SK-N-SH (cell line): ENCODE measurements at regions of chr5 and their contacts with region 1.

Region 1: DNA sequence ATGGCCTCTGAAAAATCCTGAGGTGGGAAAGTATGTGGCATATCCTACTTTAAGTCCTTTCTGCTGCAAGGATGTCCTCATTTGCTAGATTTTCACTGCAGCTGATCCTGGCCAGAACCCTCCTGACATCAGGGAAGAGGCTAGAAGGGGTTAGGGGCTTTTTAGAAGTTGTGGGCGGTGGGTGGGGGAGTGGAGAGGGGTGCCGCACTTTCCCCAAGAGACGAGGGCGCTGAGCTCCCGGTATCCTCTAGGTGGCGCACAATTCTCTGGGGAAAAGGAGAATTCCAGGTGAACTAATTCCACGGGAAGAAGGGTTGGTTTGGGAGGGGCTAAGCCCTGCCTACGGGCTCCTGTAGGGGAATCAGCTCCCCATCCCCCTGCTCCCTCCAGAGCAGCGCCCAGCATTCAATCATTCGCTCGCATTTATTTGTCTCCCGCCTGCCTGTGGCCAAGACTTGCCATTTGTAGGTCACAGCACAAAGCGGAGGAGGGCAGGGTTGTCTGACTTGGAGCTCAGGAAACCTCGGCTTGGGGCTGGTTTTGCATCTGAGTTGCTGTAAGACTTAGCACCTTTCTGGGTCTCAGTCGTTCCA is 42.9 kb upstream of the HAND1 start:
- DNase-seq: peak; percentile 48
- H3K4me3 ChIP-seq: no peak overlapping the region
- H3K27ac ChIP-seq: peak overlapping the region in 1 of 2 experiments; percentile 100; a peak in 2 of 4 replicates
- H3K4me1 ChIP-seq: peaks cover 0 to 83% of the 10 kb centered on the region in 2 experiments; a peak in 2 of 4 replicates
- H3K27me3 ChIP-seq: no peaks in the 10 kb centered on the region
- CTCF ChIP-seq: peak; percentile 77
- EP300 ChIP-seq: no peak
- RAD21 ChIP-seq: peak; percentile 70

Region 2: DNA sequence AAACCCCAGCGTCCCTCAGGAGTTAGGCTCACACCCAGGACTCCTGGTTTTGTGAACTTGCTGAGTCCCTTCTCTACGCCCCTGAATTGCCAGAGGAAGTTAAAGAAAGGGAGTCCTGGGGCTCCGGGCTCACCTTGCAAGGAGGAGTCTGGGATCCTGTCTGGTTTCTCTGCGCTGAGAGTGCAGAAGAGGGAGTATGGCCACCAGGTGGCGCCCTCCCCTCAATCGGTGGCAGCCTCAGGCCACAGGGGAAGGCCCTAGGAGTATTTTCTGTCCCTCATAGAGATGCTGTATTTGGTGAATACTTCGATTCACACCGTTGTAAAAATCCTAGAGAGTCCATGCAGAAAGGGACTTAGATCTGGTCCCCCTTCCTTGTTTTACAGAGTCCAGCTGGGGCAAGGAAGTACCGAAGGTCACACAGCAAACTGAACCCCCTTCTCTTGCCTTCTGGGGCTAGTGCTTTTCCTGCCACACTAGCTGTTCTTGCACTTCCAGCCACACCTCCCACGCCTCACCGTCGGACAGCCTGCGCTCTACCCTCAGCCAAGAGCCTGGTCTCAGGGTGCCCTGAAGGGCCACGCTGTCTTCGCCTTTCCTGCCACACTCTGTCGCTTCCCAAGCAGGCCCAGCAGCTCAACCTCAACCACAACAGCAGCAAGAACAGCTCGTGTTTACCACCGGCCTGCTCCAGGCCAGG is 53.2 kb before region 1 on chr5:
- CTCF ChIA-PET with region 1: interaction called, 295 read pairs
- POLR2A ChIA-PET with region 1: interaction called, 28 read pairs
- DNase-seq: peak; percentile 85
- H3K4me3 ChIP-seq: no peak overlapping the region; a peak in 1 of 4 replicates
- H3K27ac ChIP-seq: peak overlapping the region in 1 of 2 experiments; percentile 53; a peak in 1 of 4 replicates
- H3K4me1 ChIP-seq: peaks cover 0 to 39% of the 10 kb centered on the region in 2 experiments; a peak in 2 of 4 replicates
- H3K27me3 ChIP-seq: no peaks in the 10 kb centered on the region; the same call in 1 of the 2 replicates
- CTCF ChIP-seq: peak; percentile 93
- EP300 ChIP-seq: no peak; a peak in 1 of 4 replicates
- RAD21 ChIP-seq: peak; percentile 94

Region 3: DNA sequence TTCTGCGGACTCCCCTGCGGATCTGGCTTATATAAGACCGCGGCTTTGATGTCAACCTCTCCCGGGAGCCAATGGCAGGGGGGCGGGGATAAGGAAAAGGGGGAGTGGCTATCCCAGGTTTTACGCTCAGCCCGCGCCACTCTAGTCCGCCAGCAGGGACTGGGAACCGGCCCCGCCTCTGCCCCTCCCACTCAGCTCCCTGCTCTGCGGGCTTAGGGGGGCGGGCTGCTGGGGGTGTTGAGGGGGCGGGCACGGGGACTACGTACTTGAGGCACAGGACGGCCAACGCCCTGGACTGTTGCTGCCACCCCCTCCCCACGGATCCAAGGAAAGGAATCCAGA is 42.8 kb before region 1 on chr5 and contains the start of gene HAND1:
- CTCF ChIA-PET with region 1: interaction called, 295 read pairs
- POLR2A ChIA-PET with region 1: interaction called, 87 read pairs
- DNase-seq: peak; percentile 99
- H3K4me3 ChIP-seq: peak within 1 kb of the TSS; percentile 60 to 74
- H3K27ac ChIP-seq: peak within 1 kb of the TSS in 1 of 2 experiments; percentile 96; a peak in 2 of 4 replicates
- H3K4me1 ChIP-seq: peaks cover 0 to 46% of the 10 kb centered on the region in 2 experiments; a peak in 1 of 4 replicates
- H3K27me3 ChIP-seq: peaks cover 94% of the 10 kb centered on the region
- CTCF ChIP-seq: no peak
- EP300 ChIP-seq: no peak; a peak in 1 of 4 replicates
- RAD21 ChIP-seq: 0 out of 2 replicates have a peak, but pooled peaks have one; percentile 24
- polyA plus RNA-seq, gene HAND1: 1.1 and 2.6 TPM in 2 replicates

Region 4: DNA sequence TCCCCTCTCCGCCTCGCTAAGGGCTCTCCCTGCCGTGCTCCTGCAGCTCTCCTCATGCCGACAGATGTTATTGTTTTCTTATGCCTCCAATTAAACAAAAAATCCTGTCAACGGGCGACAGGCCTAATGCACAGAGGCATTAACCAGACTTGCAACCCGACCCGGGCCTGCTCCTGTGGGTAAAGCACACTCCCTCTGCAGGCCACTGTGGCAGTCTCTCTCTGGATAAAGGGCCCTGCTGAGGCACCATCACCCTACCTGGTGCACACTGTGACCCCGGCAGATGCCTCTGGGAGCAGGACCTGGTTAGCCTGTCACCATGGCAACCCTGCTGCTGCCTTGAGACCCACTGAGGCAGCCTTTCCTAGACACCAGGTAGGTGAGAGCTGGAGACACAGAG is 15.3 kb before region 1 on chr5:
- CTCF ChIA-PET with region 1: interaction called, 112 read pairs
- POLR2A ChIA-PET with region 1: interaction called, 16 read pairs
- DNase-seq: peak; percentile 83
- H3K4me3 ChIP-seq: no peak overlapping the region
- H3K27ac ChIP-seq: peak overlapping the region in 1 of 2 experiments; percentile 92; a peak in 2 of 4 replicates
- H3K4me1 ChIP-seq: peaks cover 0 to 28% of the 10 kb centered on the region in 2 experiments; a peak in 2 of 4 replicates
- H3K27me3 ChIP-seq: no peaks in the 10 kb centered on the region; the same call in none of the 2 replicates
- CTCF ChIP-seq: no peak
- EP300 ChIP-seq: peak in 1 of 2 experiments; percentile 86; a peak in 2 of 4 replicates
- RAD21 ChIP-seq: peak; percentile 55

Region 5: DNA sequence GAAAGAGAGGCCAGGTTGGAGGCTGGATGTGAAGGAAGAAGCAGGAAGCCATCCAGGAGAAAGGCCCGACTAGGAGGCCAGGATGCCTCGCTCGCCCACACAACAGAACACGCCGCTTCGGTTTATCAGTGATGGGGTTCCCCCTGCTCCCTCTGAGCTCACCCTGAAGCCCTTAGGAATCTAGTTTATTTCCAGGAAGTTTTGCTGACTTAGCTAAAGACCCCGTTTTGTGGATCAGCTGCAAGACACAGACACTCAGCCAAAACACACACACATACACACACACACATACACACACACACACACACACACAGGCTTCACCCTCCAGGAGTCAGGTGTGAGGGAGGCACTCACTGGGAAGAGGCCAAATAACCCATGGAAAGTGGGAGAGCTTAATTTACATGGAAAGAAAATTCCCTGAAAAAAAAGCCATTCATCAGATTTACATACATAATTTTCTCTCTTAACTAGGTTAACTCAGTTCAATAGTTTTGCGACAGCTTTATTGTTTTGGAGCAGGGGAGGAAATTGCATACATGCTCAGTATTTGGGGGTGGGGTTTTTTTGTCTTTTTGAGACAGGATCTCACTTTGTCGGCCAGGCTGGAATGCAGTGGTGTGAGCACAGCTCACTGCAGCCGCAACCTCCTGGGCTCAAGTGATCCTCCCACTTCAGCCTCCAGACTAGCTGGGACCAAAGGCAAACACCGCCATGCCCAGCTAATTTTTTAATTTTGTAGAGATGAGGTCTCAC is 49.8 kb after region 1 on chr5:
- CTCF ChIA-PET with region 1: interaction called, 33 read pairs
- POLR2A ChIA-PET with region 1: interaction called, 5 read pairs
- DNase-seq: no peak
- H3K4me3 ChIP-seq: no peak overlapping the region
- H3K27ac ChIP-seq: no peak overlapping the region
- H3K4me1 ChIP-seq: peaks cover 0 to 18% of the 10 kb centered on the region in 2 experiments; a peak in 1 of 4 replicates
- H3K27me3 ChIP-seq: no peaks in the 10 kb centered on the region; the same call in 1 of the 2 replicates
- CTCF ChIP-seq: no peak
- EP300 ChIP-seq: no peak
- RAD21 ChIP-seq: no peak

Region 6: GRCh38 chr5:154587123-154588026 is 66.4 kb after region 1 on chr5:
- CTCF ChIA-PET with region 1: interaction called, 11 read pairs
- POLR2A ChIA-PET with region 1: no interaction called
- DNase-seq: peak; percentile 36
- H3K4me3 ChIP-seq: no peak overlapping the region
- H3K27ac ChIP-seq: no peak overlapping the region
- H3K4me1 ChIP-seq: peaks cover 0 to 10% of the 10 kb centered on the region in 2 experiments; a peak in 1 of 4 replicates
- H3K27me3 ChIP-seq: no peaks in the 10 kb centered on the region; the same call in 1 of the 2 replicates
- CTCF ChIP-seq: no peak
- EP300 ChIP-seq: no peak
- RAD21 ChIP-seq: no peak

Region 7: DNA sequence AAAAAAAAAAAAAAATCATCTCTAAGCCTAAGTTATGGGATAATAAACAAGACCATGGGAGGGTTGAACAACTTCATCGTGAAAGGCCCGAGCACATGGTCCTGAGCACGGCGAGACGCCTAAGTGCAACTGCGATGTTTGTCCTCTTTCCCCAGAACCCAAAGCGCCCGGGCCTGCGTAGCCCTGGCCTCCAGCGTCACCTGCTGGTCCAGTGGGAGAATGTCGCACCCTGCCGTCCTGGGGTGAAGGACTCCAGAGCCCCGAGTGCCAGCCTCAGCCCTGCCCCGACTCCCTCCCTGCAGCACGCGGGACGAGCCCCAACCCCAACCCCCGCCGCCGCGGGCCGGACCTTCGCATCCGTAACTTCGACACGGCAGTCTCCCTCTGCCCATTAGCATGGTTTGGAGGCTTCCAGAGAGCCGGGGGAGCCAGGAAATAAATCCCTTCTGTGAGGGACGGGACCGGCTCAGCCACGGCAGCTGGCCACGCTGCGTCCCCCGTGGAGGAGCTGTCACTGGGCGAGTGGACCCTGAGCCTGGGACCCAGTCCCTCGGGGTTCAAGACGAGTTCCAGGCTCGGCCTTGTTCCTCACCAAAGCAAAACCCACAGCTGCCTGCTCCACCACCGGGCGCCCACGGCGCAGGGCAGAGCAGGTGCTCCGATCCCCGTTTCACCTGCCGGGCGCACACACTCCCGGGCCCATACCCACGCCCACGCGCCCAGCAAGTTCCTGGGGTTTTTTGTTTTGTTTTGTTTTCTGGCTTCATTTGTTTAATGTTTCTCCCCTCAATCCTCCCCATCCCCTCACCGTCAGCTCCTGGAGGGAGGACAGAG is 89.6 kb after region 1 on chr5:
- CTCF ChIA-PET with region 1: interaction called, 179 read pairs
- POLR2A ChIA-PET with region 1: interaction called, 7 read pairs
- DNase-seq: peak; percentile 96
- H3K4me3 ChIP-seq: peak overlapping the region; percentile 14 to 47; a peak in 3 of 4 replicates
- H3K27ac ChIP-seq: no peak overlapping the region
- H3K4me1 ChIP-seq: peaks cover 0 to 37% of the 10 kb centered on the region in 2 experiments; a peak in 1 of 4 replicates
- H3K27me3 ChIP-seq: peaks cover 7% of the 10 kb centered on the region
- CTCF ChIP-seq: peak; percentile 86
- EP300 ChIP-seq: peak in 1 of 2 experiments; percentile 11; a peak in 1 of 4 replicates
- RAD21 ChIP-seq: peak; percentile 100